Thyroid gland (tissue), 4 donors: ENCODE measurements at regions of chr3 and their contacts with region 1.

Region 1: GRCh38 chr3:195863121-195864006 is 45.0 kb downstream of the TNK2 start:
- DNase-seq: peak; percentile 91 to 94
- H3K4me3 ChIP-seq: no peak overlapping the region
- H3K27ac ChIP-seq: peak overlapping the region in 1 of 3 donors; percentile 40
- H3K4me1 ChIP-seq: peaks cover 3 to 8% of the 10 kb centered on the region in 2 donors
- H3K27me3 ChIP-seq: no peaks in the 10 kb centered on the region
- CTCF ChIP-seq: peak; percentile 76 to 98 (median 95)
- POLR2A ChIP-seq: no peak

Region 2: GRCh38 chr3:195894780-195895607 is 31.6 kb after region 1 on chr3:
- intact Hi-C with region 1: loop called (anchors 2 kb)
- DNase-seq: peak; percentile 39 to 49
- H3K4me3 ChIP-seq: peak overlapping the region in 2 of 3 donors; percentile 25 to 54
- H3K27ac ChIP-seq: peak overlapping the region in 2 of 3 donors; percentile 71 to 84
- H3K4me1 ChIP-seq: peaks cover 46 to 59% of the 10 kb centered on the region in 2 donors
- H3K27me3 ChIP-seq: no peaks in the 10 kb centered on the region
- CTCF ChIP-seq: peak; percentile 92 to 98 (median 96)
- POLR2A ChIP-seq: no peak

Region 3: GRCh38 chr3:195909644-195910508 is 46.5 kb after region 1 on chr3:
- intact Hi-C with region 1: loop called (anchors 5 kb)
- DNase-seq: peak; percentile 81 to 82
- H3K4me3 ChIP-seq: peak overlapping the region in 1 of 3 donors; percentile 51
- H3K27ac ChIP-seq: peak overlapping the region in 1 of 3 donors; percentile 17
- H3K4me1 ChIP-seq: peaks cover 35 to 40% of the 10 kb centered on the region in 2 donors
- H3K27me3 ChIP-seq: no peaks in the 10 kb centered on the region
- CTCF ChIP-seq: no peak
- POLR2A ChIP-seq: peak; percentile 3 to 62

Region 4: DNA sequence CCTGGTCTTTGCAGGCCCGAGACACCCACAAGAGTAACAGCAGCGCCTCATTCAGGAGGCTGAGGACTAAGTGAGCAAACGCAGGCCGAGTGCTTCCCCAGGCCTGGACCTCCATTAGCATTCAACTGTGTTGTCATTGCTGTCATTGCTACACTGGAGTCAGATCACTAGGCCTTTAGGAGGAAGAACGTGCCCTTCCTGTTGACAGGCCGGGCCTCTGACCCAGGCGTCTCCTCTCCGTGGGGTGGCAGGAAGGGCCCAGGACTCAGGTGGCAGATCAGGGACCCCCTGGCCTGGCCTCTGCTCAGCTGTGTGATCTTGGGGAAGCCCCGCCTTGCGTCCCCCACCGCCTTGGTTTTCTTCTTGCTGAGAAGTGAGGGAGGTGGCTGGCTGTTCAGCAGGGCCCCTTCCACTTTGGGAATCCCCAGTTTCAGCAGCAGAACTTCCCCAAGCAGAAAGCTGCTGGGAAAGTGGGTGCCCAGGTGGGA is 328.7 kb after region 1 on chr3:
- intact Hi-C with region 1: no loop called
- DNase-seq: no peak
- H3K4me3 ChIP-seq: no peak overlapping the region
- H3K27ac ChIP-seq: no peak overlapping the region
- H3K4me1 ChIP-seq: no peaks in the 10 kb centered on the region
- H3K27me3 ChIP-seq: no peaks in the 10 kb centered on the region
- CTCF ChIP-seq: no peak
- POLR2A ChIP-seq: no peak

Region 5: GRCh38 chr3:197270558-197271317 is 1407.4 kb after region 1 on chr3:
- intact Hi-C with region 1: no loop called
- DNase-seq: no peak
- H3K4me3 ChIP-seq: no peak overlapping the region
- H3K27ac ChIP-seq: no peak overlapping the region
- H3K4me1 ChIP-seq: peaks cover 8 to 25% of the 10 kb centered on the region in 2 donors
- H3K27me3 ChIP-seq: no peaks in the 10 kb centered on the region
- CTCF ChIP-seq: no peak
- POLR2A ChIP-seq: no peak